AG04450 (cell line): ENCODE measurements at regions of chr21 and their contacts with region 1.

Region 1: DNA sequence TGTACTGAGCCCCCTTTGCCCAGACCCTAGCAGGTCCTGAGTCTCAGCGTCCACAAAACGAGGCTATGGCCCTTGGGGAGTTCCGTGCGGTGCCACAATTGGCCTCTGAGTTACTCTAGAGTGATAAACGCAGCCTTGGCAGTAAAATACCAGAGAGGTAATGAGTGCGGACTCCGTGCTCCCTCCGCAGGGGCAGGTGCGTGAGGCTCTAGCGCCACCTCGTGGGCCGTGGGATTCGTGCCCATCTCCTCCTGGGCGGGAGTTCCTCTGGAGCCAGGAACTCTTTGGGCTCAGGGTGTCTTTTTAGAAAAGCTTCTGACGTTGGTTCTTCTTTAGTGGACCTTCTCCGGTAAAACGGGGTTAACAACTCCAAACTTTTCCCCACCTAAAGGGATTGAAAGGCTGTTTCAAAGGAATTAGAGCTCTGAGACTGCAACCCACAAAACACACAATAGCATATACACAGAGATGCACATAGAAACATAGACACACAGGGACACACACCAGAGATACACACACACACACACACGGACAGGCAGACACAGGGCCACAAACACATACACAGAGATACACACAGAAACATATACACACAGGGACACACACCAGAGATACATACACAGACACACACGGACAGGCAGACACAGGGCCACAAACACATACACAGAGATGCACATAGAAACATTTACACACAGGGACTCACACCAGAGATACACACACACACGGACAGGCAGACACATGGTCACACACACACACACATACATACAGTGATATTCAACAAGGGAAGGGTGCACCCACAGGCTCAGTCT is 99.4 kb downstream of the KCNJ15 start:
- DNase-seq: peak; percentile 27
- H3K4me3 ChIP-seq: no peak overlapping the region
- H3K27ac ChIP-seq: no peak overlapping the region
- H3K27me3 ChIP-seq: peaks cover 2% of the 10 kb centered on the region
- CTCF ChIP-seq: peak; percentile 100

Region 2: DNA sequence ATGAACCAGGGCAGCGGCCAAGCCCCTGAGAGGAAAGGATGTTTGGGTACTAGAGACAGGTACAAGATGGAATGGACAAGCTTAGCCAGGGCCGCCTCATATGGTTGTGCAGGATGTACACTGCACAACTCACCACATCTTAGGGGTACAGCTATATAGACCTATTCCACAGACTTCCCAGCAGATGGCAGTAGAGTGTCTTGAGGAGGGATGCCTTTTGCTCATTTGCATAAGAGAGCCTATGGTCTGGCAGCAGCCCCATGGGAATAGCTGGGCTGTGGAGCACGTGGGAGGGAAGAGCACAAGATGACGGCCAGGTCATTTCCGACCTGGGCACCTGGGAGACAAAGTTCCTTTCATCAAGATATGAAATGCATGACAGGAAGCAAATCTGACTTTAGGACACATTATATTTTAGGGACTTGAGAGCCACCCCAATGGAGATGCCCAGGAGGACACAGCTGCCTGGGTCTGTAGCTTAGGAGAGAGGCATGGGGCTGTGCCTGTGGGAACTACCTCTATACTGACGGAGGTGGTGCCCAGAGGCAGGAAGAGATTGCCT is 655.5 kb before region 1 on chr21:
- CTCF ChIA-PET with region 1: interaction called, 41 read pairs
- POLR2A ChIA-PET with region 1: no interaction called
- DNase-seq: peak; percentile 61
- H3K4me3 ChIP-seq: no peak overlapping the region
- H3K27ac ChIP-seq: no peak overlapping the region
- H3K27me3 ChIP-seq: peaks cover 22% of the 10 kb centered on the region
- CTCF ChIP-seq: peak; percentile 86

Region 3: DNA sequence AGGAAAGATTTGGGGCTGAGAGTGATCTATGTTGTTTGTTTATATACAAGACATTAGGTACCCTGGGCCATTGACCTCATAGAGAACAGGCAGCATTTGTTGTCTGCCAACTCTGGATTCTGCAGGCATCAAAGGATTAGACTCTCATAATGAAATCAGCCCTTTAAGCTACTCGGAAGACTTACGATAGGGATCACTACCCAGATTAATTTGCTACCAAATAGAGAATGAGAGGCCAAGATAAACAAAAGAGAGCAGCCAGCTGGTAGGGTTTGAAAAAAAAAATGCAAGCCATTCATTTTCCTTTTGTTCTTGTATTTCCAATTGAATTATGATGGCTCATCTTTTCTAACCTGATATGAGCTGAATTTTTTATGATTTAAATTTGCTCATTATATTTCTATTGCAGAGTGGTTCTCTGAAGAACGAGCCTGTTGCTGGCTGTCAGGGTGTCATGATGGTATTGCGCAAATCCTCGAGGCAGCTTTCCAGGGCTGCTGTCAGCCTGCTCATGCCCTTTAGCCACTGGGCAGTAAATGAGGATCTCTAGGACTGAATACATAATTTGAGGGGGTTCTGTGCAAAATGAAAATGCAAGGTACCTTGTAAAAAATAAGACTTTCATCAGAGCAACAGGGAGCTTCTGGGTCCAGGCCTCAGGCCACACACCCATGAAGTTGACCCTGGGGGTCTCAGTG is 215.8 kb before region 1 on chr21:
- CTCF ChIA-PET with region 1: interaction called, 10 read pairs
- POLR2A ChIA-PET with region 1: no interaction called
- DNase-seq: no peak
- H3K4me3 ChIP-seq: no peak overlapping the region
- H3K27ac ChIP-seq: no peak overlapping the region
- H3K27me3 ChIP-seq: no peaks in the 10 kb centered on the region
- CTCF ChIP-seq: no peak

Region 4: GRCh38 chr21:38205940-38206339 is 150.3 kb before region 1 on chr21:
- CTCF ChIA-PET with region 1: interaction called, 13 read pairs
- POLR2A ChIA-PET with region 1: no interaction called
- DNase-seq: no peak
- H3K4me3 ChIP-seq: no peak overlapping the region
- H3K27ac ChIP-seq: no peak overlapping the region
- H3K27me3 ChIP-seq: peaks cover 32% of the 10 kb centered on the region
- CTCF ChIP-seq: no peak

Region 5: GRCh38 chr21:38236232-38236631 is 120.0 kb before region 1 on chr21:
- CTCF ChIA-PET with region 1: interaction called, 26 read pairs
- POLR2A ChIA-PET with region 1: no interaction called
- DNase-seq: no peak
- H3K4me3 ChIP-seq: no peak overlapping the region
- H3K27ac ChIP-seq: no peak overlapping the region
- H3K27me3 ChIP-seq: no peaks in the 10 kb centered on the region
- CTCF ChIP-seq: peak; percentile 38; the same call in 1 of the 2 replicates

Region 6: DNA sequence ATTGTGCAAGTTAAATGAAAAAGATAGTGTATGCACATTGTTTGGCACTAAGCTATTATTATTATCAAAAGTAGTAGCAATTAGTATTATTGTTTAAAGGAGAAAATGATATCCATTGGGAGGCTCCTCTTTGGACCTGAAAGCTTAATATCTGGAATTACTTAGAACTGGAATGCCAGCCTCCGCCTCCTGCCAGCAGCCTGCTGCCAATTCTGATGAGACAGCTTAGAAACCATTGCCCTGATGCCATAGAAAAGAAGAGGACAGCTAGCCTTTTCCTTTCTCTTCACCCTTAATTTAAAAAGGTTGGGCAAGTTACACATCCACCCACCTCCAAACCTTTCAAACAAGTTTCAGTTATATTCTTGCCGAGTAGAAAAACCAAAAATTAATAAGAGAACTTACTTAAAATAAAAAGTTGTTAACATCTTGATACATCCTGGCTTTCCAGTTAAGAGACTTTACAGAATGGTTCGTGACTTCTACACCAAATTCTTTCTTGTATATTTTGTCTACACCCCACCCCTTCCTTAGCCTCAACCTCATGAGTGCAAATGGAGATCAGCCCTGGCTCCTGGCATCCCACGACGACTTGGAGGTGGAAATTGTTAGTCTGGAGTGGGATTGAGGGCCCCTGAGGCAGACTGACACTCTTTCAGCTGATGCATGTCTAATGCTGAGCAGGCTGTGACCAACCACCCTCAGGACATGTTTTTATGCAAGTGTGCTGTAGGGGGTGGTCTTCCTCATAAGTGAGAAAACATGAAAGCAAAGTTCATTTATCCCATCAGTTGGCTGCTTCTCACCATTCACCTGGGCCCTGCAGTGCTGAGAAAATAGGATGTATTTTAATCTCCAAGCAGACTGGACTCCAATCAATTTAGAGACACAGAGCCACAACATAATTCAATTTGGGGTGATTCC is 21.2 kb after region 1 on chr21:
- CTCF ChIA-PET with region 1: interaction called, 10 read pairs
- POLR2A ChIA-PET with region 1: no interaction called
- DNase-seq: no peak
- H3K4me3 ChIP-seq: no peak overlapping the region
- H3K27ac ChIP-seq: no peak overlapping the region
- H3K27me3 ChIP-seq: peaks cover 10% of the 10 kb centered on the region
- CTCF ChIP-seq: no peak

Region 7: GRCh38 chr21:38888991-38889561 is 532.9 kb after region 1 on chr21:
- CTCF ChIA-PET with region 1: no interaction called
- POLR2A ChIA-PET with region 1: no interaction called
- DNase-seq: no peak
- H3K4me3 ChIP-seq: no peak overlapping the region
- H3K27ac ChIP-seq: no peak overlapping the region
- H3K27me3 ChIP-seq: no peaks in the 10 kb centered on the region
- CTCF ChIP-seq: no peak